AG04450 (cell line): ENCODE measurements at regions of chr16 and their contacts with region 1.

Region 1: DNA sequence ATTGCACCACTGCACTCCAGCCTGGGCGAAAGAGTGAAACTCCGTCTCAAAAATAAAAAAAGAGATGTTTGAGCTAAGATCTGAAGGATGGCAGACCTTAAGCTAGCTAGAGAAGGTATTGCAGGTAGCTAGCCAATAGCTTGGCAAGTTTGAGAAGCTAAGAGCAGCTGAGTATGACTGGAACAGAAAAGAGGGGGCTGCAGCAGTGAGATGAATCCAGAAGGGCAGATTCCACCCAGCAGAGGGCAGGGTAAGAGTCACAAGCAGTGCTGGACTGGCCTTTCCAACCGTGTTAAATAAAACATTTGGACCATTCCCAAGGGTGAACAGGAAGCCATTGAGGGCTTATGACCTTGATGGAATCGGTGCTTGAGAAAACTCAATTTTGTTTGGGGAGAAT is 5.7 kb upstream of the PHAF1 start:
- DNase-seq: no peak
- H3K4me3 ChIP-seq: no peak overlapping the region
- H3K27ac ChIP-seq: no peak overlapping the region
- H3K27me3 ChIP-seq: no peaks in the 10 kb centered on the region
- CTCF ChIP-seq: peak; percentile 37

Region 2: GRCh38 chr16:66894948-66895688 is 208.9 kb before region 1 on chr16:
- CTCF ChIA-PET with region 1: interaction called, 16 read pairs
- POLR2A ChIA-PET with region 1: no interaction called
- DNase-seq: no peak
- H3K4me3 ChIP-seq: no peak overlapping the region
- H3K27ac ChIP-seq: peak overlapping the region; percentile 11
- H3K27me3 ChIP-seq: no peaks in the 10 kb centered on the region
- CTCF ChIP-seq: peak; percentile 93

Region 3: DNA sequence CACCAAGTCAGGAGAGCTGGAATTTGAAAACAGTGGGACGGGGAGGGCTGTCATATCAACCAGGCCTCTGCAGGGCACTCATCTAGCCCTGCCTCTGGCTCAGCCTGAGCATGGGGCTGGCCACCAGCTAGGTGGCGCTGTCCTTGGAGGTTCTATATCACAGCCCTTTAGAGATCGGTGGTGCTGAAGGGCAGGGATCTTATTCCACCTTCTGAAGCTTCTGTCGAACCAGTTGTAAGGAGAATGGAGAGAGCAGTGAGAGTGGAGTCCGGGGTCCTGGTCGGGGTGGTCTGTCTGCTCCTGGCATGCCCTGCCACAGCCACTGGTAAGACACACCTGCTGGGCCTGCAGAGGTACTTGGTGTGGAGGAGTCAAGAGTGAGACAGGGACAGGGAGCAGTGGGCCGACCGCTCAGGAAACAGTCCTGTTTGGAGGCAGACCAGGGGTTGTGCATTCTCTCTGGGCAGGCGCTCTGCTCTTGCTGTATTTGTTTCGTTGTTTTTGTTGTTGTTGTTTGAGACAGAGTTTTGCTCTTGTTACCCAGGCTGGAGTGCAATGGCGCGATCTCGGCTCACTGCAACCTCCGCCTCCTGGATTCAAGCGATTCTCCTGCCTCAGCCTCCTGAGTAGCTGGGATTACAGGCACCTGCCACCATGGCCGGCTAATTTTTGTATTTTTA is 142.9 kb before region 1 on chr16 and contains the start of gene CES3:
- CTCF ChIA-PET with region 1: interaction called, 11 read pairs
- POLR2A ChIA-PET with region 1: no interaction called
- DNase-seq: peak; percentile 20
- H3K4me3 ChIP-seq: no peak within 1 kb of the TSS
- H3K27ac ChIP-seq: no peak within 1 kb of the TSS
- H3K27me3 ChIP-seq: peaks cover 29% of the 10 kb centered on the region
- CTCF ChIP-seq: peak; percentile 80
- polyA plus RNA-seq, gene CES3: 0.06 and 0.12 TPM in 2 replicates

Region 4: DNA sequence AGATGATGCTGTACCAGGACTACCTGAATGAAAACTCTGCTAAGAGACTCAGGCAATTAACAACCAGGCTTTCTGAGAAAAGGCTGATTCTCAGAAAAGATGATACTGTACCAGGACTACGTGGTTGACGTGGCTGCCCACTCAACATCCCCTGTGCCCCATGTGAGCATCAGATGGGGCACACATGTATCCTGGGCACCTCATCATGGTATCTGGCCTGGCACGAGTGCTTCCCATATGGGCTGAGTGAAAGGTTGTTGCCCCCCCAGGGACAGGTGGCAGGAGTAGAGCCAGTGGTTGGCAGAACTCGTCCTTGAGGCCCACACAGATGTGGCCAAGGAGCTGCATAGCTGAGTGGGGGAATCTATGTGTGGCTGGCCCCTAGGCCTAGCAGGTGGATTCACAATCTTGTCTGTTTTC is 119.2 kb before region 1 on chr16:
- CTCF ChIA-PET with region 1: interaction called, 39 read pairs
- POLR2A ChIA-PET with region 1: no interaction called
- DNase-seq: no peak
- H3K4me3 ChIP-seq: no peak overlapping the region
- H3K27ac ChIP-seq: no peak overlapping the region
- H3K27me3 ChIP-seq: peaks cover 2% of the 10 kb centered on the region
- CTCF ChIP-seq: no peak

Region 5: GRCh38 chr16:67086822-67087221 is 17.2 kb before region 1 on chr16:
- CTCF ChIA-PET with region 1: interaction called, 11 read pairs
- POLR2A ChIA-PET with region 1: no interaction called
- DNase-seq: peak; percentile 21
- H3K4me3 ChIP-seq: no peak overlapping the region
- H3K27ac ChIP-seq: no peak overlapping the region
- H3K27me3 ChIP-seq: no peaks in the 10 kb centered on the region
- CTCF ChIP-seq: no peak

Region 6: GRCh38 chr16:67159593-67160406 is 55.7 kb after region 1 on chr16 and contains the starts of genes FBXL8 and TRADD:
- CTCF ChIA-PET with region 1: interaction called, 14 read pairs
- POLR2A ChIA-PET with region 1: no interaction called
- DNase-seq: no peak
- H3K4me3 ChIP-seq: peak within 1 kb of the TSS; percentile 92
- H3K27ac ChIP-seq: peak within 1 kb of the TSS; percentile 31
- H3K27me3 ChIP-seq: peaks cover 30% of the 10 kb centered on the region
- CTCF ChIP-seq: peak; percentile 64
- polyA plus RNA-seq, gene FBXL8: 2.7 and 3.2 TPM in 2 replicates
- polyA plus RNA-seq, gene TRADD: 9.4 and 10.9 TPM in 2 replicates